CD4-positive, alpha-beta memory T cell (primary cell): ENCODE measurements at regions of chr5 and their contacts with region 1.

Region 1: GRCh38 chr5:119302916-119303897 is 52.6 kb upstream of the TNFAIP8 start:
- DNase-seq: no peak
- H3K4me3 ChIP-seq: peak overlapping the region; percentile 13 to 17
- H3K4me3 Mint-ChIP-seq: peak overlapping the region; percentile 17 to 96 (median 74)
- H3K27ac ChIP-seq: peak overlapping the region; percentile 43
- H3K27ac Mint-ChIP-seq: peak overlapping the region; percentile 80 to 99 (median 94)
- H3K4me1 ChIP-seq: peaks cover 83% of the 10 kb centered on the region
- H3K4me1 Mint-ChIP-seq: peaks cover 64 to 97% (median 79%) of the 10 kb centered on the region in 4 donors
- H3K27me3 ChIP-seq: no peaks in the 10 kb centered on the region
- H3K27me3 Mint-ChIP-seq: no peaks in the 10 kb centered on the region

Region 2: DNA sequence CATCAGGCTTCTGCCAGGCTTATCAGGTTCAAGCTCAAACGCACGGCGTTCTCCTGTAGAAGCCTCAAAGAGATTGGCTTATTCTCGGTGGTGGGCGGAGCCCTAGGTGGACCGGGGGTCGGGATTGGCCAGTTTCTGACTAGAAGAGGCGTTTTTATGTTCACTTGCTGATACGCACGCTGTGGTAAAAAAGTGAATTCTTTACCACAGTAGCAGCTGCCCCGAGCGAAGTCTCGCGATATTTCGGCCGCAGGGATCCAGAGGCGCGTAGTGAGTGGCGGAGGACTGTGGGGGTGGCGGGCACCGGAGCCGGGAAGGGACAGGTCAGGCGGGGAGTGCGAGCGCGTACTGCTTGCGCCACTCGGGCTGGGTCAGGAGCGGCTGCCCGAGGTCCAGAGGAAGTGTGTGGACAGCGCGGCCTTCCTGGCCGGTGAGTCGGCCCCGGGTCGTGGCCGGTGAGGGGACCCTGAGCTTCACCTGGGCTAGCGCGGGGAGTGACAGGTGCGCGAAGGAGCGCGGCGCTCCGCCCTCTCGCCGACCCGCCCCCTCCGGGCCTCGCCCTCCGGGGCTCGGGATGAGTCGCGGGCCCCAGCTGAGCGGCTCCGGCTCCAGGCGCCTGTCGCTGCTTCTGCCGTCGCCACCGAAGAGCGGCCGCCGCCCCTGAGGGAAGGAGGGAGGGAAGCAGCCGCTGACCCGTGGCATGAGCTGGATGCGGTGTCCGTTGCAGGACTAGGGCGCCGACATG is 232.2 kb before region 1 on chr5 and contains the start of gene DMXL1:
- CTCF ChIA-PET with region 1: no interaction called
- POLR2A ChIA-PET with region 1: interaction called, 6 read pairs
- intact Hi-C with region 1: loop called (anchors 1 kb)
- DNase-seq: peak; percentile 97 to 99 (median 98)
- H3K4me3 ChIP-seq: peak within 1 kb of the TSS; percentile 63 to 95
- H3K4me3 Mint-ChIP-seq: peak within 1 kb of the TSS; percentile 92 to 99 (median 99)
- H3K27ac ChIP-seq: peak within 1 kb of the TSS; percentile 86
- H3K27ac Mint-ChIP-seq: peak within 1 kb of the TSS; percentile 99 to 100 (median 99)
- H3K4me1 ChIP-seq: peaks cover 48% of the 10 kb centered on the region
- H3K4me1 Mint-ChIP-seq: peaks cover 21 to 46% (median 29%) of the 10 kb centered on the region in 4 donors
- H3K27me3 ChIP-seq: no peaks in the 10 kb centered on the region
- H3K27me3 Mint-ChIP-seq: peaks cover 0 to 2% of the 10 kb centered on the region in 2 donors
- total RNA-seq, gene DMXL1: 33.2 to 37.9 TPM

Region 3: DNA sequence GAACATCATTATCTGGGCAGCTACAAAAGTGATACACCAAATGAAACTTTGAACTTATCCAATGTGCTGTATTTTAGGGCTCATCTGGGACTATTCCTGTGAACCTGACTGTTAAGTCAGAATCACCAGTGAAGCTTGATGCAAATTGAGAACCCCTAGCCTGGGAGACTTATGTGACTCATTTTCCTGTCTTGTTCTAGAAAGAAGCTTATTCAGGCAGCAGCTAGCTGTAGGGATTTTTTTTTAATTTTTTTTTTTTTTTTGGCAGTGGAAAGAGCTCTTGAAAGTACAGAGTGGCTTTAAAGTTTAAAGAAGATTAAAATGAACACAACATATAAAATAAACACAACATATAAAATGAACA is 28.5 kb before region 1 on chr5:
- CTCF ChIA-PET with region 1: interaction called, 37 read pairs
- POLR2A ChIA-PET with region 1: interaction called, 187 read pairs
- intact Hi-C with region 1: loop called (anchors 1 kb)
- DNase-seq: peak in 1 of 5 donors; percentile 84
- H3K4me3 ChIP-seq: peak overlapping the region in 1 of 2 donors; percentile 74
- H3K4me3 Mint-ChIP-seq: peak overlapping the region; percentile 82 to 100 (median 100)
- H3K27ac ChIP-seq: peak overlapping the region; percentile 71
- H3K27ac Mint-ChIP-seq: peak overlapping the region; percentile 90 to 99 (median 96)
- H3K4me1 ChIP-seq: peaks cover 89% of the 10 kb centered on the region
- H3K4me1 Mint-ChIP-seq: peaks cover 76 to 99% (median 85%) of the 10 kb centered on the region in 4 donors
- H3K27me3 ChIP-seq: no peaks in the 10 kb centered on the region
- H3K27me3 Mint-ChIP-seq: peaks cover 0 to 2% of the 10 kb centered on the region in 2 donors

Region 4: DNA sequence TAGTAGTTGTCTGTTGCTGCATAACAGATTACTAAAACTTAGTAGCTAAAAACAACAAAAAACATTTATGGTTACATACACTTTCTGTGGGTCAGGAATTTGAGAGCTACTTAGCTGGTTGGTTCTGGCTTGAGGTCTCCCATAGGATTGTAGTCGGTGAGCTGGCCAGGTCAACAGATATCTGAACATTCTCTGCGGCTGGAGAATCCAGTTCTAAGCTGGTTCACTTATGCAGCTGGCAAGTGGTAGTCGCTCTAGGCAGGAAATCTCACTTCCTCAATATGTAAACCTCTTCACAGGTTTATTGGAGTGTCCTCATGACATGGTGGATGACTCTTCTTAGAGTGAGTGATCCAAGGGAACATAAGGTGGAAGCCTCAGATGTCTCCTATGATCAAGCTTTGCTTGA is 13.0 kb before region 1 on chr5:
- CTCF ChIA-PET with region 1: interaction called, 14 read pairs
- POLR2A ChIA-PET with region 1: interaction called, 66 read pairs
- intact Hi-C with region 1: loop called (anchors 1 kb)
- DNase-seq: no peak
- H3K4me3 ChIP-seq: peak overlapping the region in 1 of 2 donors; percentile 38
- H3K4me3 Mint-ChIP-seq: peak overlapping the region; percentile 71 to 92 (median 84)
- H3K27ac ChIP-seq: peak overlapping the region; percentile 88
- H3K27ac Mint-ChIP-seq: peak overlapping the region; percentile 91 to 99 (median 97)
- H3K4me1 ChIP-seq: peaks cover 82% of the 10 kb centered on the region
- H3K4me1 Mint-ChIP-seq: peaks cover 67 to 93% (median 83%) of the 10 kb centered on the region in 4 donors
- H3K27me3 ChIP-seq: no peaks in the 10 kb centered on the region
- H3K27me3 Mint-ChIP-seq: no peaks in the 10 kb centered on the region

Region 5: GRCh38 chr5:119355685-119356611 is 52.7 kb after region 1 on chr5 and contains the start of gene TNFAIP8:
- CTCF ChIA-PET with region 1: interaction called, 3 read pairs
- POLR2A ChIA-PET with region 1: interaction called, 13 read pairs
- intact Hi-C with region 1: no loop called
- DNase-seq: peak in 2 of 5 donors; percentile 12 to 75
- H3K4me3 ChIP-seq: peak within 1 kb of the TSS; percentile 51 to 55
- H3K4me3 Mint-ChIP-seq: peak within 1 kb of the TSS; percentile 82 to 97 (median 90)
- H3K27ac ChIP-seq: peak within 1 kb of the TSS; percentile 78
- H3K27ac Mint-ChIP-seq: peak within 1 kb of the TSS; percentile 86 to 97 (median 93)
- H3K4me1 ChIP-seq: peaks cover 93% of the 10 kb centered on the region
- H3K4me1 Mint-ChIP-seq: peaks cover 75 to 95% (median 86%) of the 10 kb centered on the region in 4 donors
- H3K27me3 ChIP-seq: no peaks in the 10 kb centered on the region
- H3K27me3 Mint-ChIP-seq: no peaks in the 10 kb centered on the region
- total RNA-seq, gene TNFAIP8: 167 to 176 TPM